OCI-LY7 (cell line): ENCODE measurements at regions of chr3 and their contacts with region 1.

Region 1: GRCh38 chr3:186534113-186534669 is 10.0 kb downstream of the CRYGS start:
- DNase-seq: peak; percentile 81
- H3K4me3 ChIP-seq: peak overlapping the region; percentile 20
- H3K27ac ChIP-seq: peak overlapping the region; percentile 76
- H3K4me1 ChIP-seq: peaks cover 58% of the 10 kb centered on the region
- CTCF ChIP-seq: no peak

Region 2: DNA sequence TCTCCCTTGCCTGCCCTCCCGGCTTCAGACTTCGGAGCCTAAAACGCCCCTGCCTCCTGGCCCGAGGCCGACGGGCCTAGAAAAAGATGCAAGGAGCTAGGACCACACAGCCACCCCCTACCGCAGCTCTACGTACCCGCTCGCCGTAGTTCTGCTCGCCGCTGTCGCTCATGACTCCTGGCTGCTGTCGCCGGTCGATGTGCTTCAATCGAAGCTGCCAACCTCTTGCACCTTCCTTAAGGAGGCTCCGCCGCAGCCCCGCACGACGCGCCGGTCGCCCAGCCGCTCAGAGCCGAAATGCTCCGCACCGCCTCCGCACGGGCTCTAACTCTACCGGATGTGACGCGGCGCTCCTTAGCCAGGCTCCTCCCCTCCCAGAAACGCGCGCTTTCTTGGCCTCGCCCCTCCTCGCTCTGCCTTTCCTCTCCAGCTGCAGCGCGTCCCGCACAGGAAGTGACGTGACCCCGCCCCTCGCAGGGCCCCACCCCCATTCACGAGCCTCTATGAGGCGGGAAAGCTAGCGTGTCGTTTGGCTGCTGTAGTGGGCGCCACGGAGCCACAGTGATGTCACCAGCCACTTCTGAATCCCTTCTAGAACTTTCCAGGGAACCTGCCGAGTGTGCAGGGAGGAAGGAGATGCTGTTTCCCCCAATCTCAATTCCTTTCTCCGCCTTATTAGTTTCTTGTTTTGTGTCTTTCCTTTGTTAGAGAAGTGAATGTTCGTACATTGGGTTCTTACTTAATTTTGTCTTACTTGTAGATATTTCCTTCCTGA is 596.3 kb before region 1 on chr3 and contains the start of gene TRA2B:
- CTCF ChIA-PET with region 1: no interaction called
- POLR2A ChIA-PET with region 1: interaction called, 5 read pairs
- intact Hi-C with region 1: loop called (anchors 5 kb)
- DNase-seq: peak; percentile 98
- H3K4me3 ChIP-seq: peak within 1 kb of the TSS; percentile 92
- H3K27ac ChIP-seq: peak within 1 kb of the TSS; percentile 88
- H3K4me1 ChIP-seq: peaks cover 22% of the 10 kb centered on the region
- CTCF ChIP-seq: peak; percentile 62
- total RNA-seq, gene TRA2B: 349 and 420 TPM in 2 replicates

Region 3: DNA sequence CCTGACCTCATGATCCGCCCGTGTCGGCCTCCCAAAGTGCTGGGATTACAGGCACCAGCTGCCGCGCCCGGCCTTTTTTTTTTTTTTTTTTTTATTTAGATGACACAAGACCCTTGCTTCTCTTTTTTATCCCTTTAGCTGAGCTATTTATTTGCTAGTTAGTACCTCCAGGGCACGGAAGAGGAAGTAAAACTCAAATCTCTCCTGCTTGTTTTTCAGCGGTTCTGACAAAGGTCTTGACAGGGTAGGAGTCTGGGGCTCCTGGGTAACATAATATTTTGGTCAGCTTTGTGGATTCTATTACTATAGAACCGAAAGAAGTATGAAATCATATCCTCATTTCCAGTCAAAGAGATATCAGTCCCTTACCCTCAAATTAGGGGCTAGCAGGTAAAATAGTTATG is 381.3 kb before region 1 on chr3:
- CTCF ChIA-PET with region 1: no interaction called
- POLR2A ChIA-PET with region 1: interaction called, 9 read pairs
- intact Hi-C with region 1: loop called (anchors 10 kb)
- DNase-seq: peak; percentile 89
- H3K4me3 ChIP-seq: peak overlapping the region; percentile 45
- H3K27ac ChIP-seq: peak overlapping the region; percentile 88
- H3K4me1 ChIP-seq: peaks cover 47% of the 10 kb centered on the region
- CTCF ChIP-seq: no peak

Region 4: GRCh38 chr3:186520957-186521842 is 13.0 kb before region 1 on chr3:
- CTCF ChIA-PET with region 1: interaction called, 6 read pairs
- POLR2A ChIA-PET with region 1: interaction called, 38 read pairs
- intact Hi-C with region 1: no loop called
- DNase-seq: peak; percentile 80
- H3K4me3 ChIP-seq: peak overlapping the region; percentile 22
- H3K27ac ChIP-seq: peak overlapping the region; percentile 74
- H3K4me1 ChIP-seq: peaks cover 61% of the 10 kb centered on the region
- CTCF ChIP-seq: no peak